ENCODE measurements at regions of chr3 and their contacts with region 1.

Region 1: DNA sequence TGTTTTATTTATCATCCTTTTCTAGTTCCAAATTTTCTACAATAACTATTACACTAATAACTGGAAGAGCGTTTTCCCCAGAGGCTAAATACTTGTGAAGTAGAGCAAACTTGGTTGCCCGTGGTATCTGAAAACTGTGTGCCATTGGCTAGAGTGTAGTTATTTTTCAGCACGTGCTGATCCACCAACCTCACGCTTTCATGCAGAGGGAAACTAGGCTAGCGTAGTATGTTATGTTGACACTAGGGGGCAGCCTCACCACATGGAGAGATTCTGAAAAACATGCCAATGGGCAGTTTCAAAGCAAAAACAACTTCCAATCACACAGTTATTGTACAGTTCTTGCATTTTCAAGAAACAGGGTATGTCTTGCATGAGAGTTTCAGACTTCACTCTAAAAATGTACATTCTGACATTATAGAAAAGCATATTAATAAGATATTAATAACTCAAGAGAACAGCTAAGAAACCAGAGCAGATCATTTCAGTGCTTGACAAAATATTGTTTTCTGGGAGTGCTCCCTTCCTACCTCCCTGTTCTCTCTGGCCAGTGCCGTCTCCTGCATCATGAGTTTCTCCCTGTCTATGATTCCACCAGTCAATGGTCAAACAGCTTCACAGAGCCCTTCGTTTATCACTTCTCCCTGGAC is 39.7 kb downstream of the SPATA12 start:
- DNase-seq: peak; percentile 12 to 68 (median 51)
- ATAC-seq: peak; percentile 59
- H3K4me3 ChIP-seq: no peak overlapping the region
- H3K4me3 Mint-ChIP-seq: no peak overlapping the region
- H3K27ac ChIP-seq: no peak overlapping the region
- H3K27ac Mint-ChIP-seq: no peak overlapping the region
- H3K4me1 ChIP-seq: no peaks in the 10 kb centered on the region
- H3K4me1 Mint-ChIP-seq: peaks cover 3% of the 10 kb centered on the region
- H3K27me3 ChIP-seq: no peaks in the 10 kb centered on the region
- H3K27me3 Mint-ChIP-seq: no peaks in the 10 kb centered on the region
- CTCF ChIP-seq: peak; percentile 91

Region 2: GRCh38 chr3:55704521-55704920 is 1395.7 kb before region 1 on chr3:
- CTCF ChIA-PET with region 1: no interaction called
- POLR2A ChIA-PET with region 1: no interaction called
- intact Hi-C with region 1: no loop called
- DNase-seq: no peak
- ATAC-seq: no peak
- H3K4me3 ChIP-seq: no peak overlapping the region
- H3K4me3 Mint-ChIP-seq: no peak overlapping the region
- H3K27ac ChIP-seq: no peak overlapping the region
- H3K27ac Mint-ChIP-seq: no peak overlapping the region
- H3K4me1 ChIP-seq: no peaks in the 10 kb centered on the region
- H3K4me1 Mint-ChIP-seq: no peaks in the 10 kb centered on the region
- H3K27me3 ChIP-seq: no peaks in the 10 kb centered on the region
- H3K27me3 Mint-ChIP-seq: no peaks in the 10 kb centered on the region
- CTCF ChIP-seq: no peak

Region 3: GRCh38 chr3:57112206-57112605 is 12.0 kb after region 1 on chr3:
- CTCF ChIA-PET with region 1: interaction called, 23 read pairs
- POLR2A ChIA-PET with region 1: no interaction called
- intact Hi-C with region 1: no loop called
- DNase-seq: no peak
- ATAC-seq: no peak
- H3K4me3 ChIP-seq: no peak overlapping the region
- H3K4me3 Mint-ChIP-seq: no peak overlapping the region
- H3K27ac ChIP-seq: no peak overlapping the region
- H3K27ac Mint-ChIP-seq: no peak overlapping the region
- H3K4me1 ChIP-seq: no peaks in the 10 kb centered on the region
- H3K4me1 Mint-ChIP-seq: no peaks in the 10 kb centered on the region
- H3K27me3 ChIP-seq: no peaks in the 10 kb centered on the region
- H3K27me3 Mint-ChIP-seq: no peaks in the 10 kb centered on the region
- CTCF ChIP-seq: no peak

Region 4: DNA sequence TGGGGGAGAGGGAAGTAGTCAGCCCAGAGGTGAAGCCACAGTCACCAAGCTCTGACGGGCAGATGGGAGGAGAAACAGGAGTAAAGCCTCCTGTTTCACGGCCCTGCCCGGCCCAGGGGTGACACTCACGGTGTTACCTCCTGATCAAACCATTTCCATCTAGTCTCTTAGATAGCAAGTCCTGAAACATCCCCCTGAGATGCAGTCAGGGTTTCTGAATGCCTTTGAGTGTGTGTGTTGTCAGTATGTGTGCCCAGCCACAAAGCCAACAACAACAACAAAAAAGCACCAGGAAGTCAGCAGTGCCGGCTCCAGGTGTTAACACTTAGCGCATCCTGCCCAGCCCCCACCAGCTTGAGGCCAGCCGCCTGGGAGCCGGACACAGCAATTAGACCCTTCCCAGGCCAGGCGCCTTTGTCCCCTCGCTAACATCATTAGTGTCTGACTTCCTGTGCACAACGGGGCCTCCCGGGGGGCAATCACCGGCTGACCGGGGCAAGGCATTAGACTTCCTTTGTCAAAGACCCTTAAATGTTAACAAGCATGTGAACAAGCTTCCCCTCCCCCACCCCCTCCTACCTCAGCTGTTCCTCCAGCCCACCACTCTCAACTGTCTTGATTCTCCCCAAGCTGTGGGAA is 30.5 kb after region 1 on chr3:
- CTCF ChIA-PET with region 1: interaction called, 4 read pairs
- POLR2A ChIA-PET with region 1: no interaction called
- intact Hi-C with region 1: loop called in 1 of 2 experiments (anchors 1 kb)
- DNase-seq: peak in 2 of 9 experiments; percentile 4 to 5
- ATAC-seq: no peak
- H3K4me3 ChIP-seq: no peak overlapping the region
- H3K4me3 Mint-ChIP-seq: no peak overlapping the region
- H3K27ac ChIP-seq: no peak overlapping the region
- H3K27ac Mint-ChIP-seq: no peak overlapping the region
- H3K4me1 ChIP-seq: no peaks in the 10 kb centered on the region
- H3K4me1 Mint-ChIP-seq: no peaks in the 10 kb centered on the region
- H3K27me3 ChIP-seq: no peaks in the 10 kb centered on the region
- H3K27me3 Mint-ChIP-seq: peaks cover 2% of the 10 kb centered on the region
- CTCF ChIP-seq: no peak

Region 5: GRCh38 chr3:57840473-57840872 is 740.3 kb after region 1 on chr3:
- CTCF ChIA-PET with region 1: no interaction called
- POLR2A ChIA-PET with region 1: no interaction called
- intact Hi-C with region 1: loop called in 1 of 2 experiments (anchors 10 kb)
- DNase-seq: no peak
- ATAC-seq: no peak
- H3K4me3 ChIP-seq: no peak overlapping the region
- H3K4me3 Mint-ChIP-seq: no peak overlapping the region
- H3K27ac ChIP-seq: no peak overlapping the region
- H3K27ac Mint-ChIP-seq: peak overlapping the region; percentile 50
- H3K4me1 ChIP-seq: no peaks in the 10 kb centered on the region
- H3K4me1 Mint-ChIP-seq: peaks cover 21% of the 10 kb centered on the region
- H3K27me3 ChIP-seq: no peaks in the 10 kb centered on the region
- H3K27me3 Mint-ChIP-seq: no peaks in the 10 kb centered on the region
- CTCF ChIP-seq: no peak

Region 6: GRCh38 chr3:57852896-57853295 is 752.7 kb after region 1 on chr3:
- CTCF ChIA-PET with region 1: interaction called, 3 read pairs
- POLR2A ChIA-PET with region 1: no interaction called
- intact Hi-C with region 1: loop called (anchors 2 to 10 kb)
- DNase-seq: peak in 1 of 9 experiments; percentile 3
- ATAC-seq: no peak
- H3K4me3 ChIP-seq: no peak overlapping the region
- H3K4me3 Mint-ChIP-seq: no peak overlapping the region
- H3K27ac ChIP-seq: no peak overlapping the region
- H3K27ac Mint-ChIP-seq: no peak overlapping the region
- H3K4me1 ChIP-seq: no peaks in the 10 kb centered on the region
- H3K4me1 Mint-ChIP-seq: no peaks in the 10 kb centered on the region
- H3K27me3 ChIP-seq: no peaks in the 10 kb centered on the region
- H3K27me3 Mint-ChIP-seq: no peaks in the 10 kb centered on the region
- CTCF ChIP-seq: peak; percentile 25

Region 7: GRCh38 chr3:57910988-57911387 is 810.8 kb after region 1 on chr3:
- CTCF ChIA-PET with region 1: interaction called, 3 read pairs
- POLR2A ChIA-PET with region 1: no interaction called
- intact Hi-C with region 1: loop called in 1 of 2 experiments (anchors 2 kb)
- DNase-seq: peak in 6 of 9 experiments; percentile 3 to 53 (median 26)
- ATAC-seq: no peak
- H3K4me3 ChIP-seq: no peak overlapping the region
- H3K4me3 Mint-ChIP-seq: no peak overlapping the region
- H3K27ac ChIP-seq: no peak overlapping the region
- H3K27ac Mint-ChIP-seq: no peak overlapping the region
- H3K4me1 ChIP-seq: no peaks in the 10 kb centered on the region
- H3K4me1 Mint-ChIP-seq: no peaks in the 10 kb centered on the region
- H3K27me3 ChIP-seq: no peaks in the 10 kb centered on the region
- H3K27me3 Mint-ChIP-seq: no peaks in the 10 kb centered on the region
- CTCF ChIP-seq: no peak